PC-9 (cell line): ENCODE measurements at regions of chr10 and their contacts with region 1.

Region 1: DNA sequence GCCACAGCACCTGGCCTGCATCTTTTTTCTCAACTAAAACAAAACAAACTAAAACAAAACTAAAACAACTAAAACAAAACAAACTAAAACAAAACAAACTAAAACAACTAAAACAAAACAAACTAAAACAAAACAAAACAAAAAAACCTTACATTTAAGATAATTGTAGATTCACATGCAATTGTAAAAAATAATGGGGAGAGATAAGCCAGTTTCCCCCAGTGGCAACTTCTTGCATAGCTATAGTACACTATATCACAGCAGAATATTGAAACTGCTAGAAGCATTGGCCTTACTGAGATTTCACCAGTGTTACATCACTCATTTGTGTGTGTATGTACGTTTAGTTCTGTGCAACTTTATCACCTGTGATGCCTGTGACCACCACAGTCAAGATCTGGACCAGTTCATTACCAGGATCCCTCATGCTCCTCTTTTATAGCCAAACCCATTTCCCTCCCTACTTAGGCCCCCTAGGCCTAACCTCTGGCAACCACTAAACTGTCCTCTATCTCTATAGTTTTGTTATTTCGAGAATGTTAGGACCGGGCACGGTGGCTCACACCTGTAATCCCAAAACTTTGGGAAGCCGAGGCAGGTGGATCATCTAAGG is 9.3 kb downstream of the FXYD4 start:
- DNase-seq: peak in 1 of 2 experiments; percentile 39
- H3K4me3 ChIP-seq: no peak overlapping the region
- H3K27ac ChIP-seq: peak overlapping the region; percentile 78
- H3K4me1 ChIP-seq: peaks cover 5% of the 10 kb centered on the region
- H3K27me3 ChIP-seq: no peaks in the 10 kb centered on the region
- CTCF ChIP-seq: peak; percentile 46; the same call in 1 of the 2 replicates

Region 2: GRCh38 chr10:42975558-42976340 is 405.0 kb before region 1 on chr10:
- CTCF ChIA-PET with region 1: no interaction called
- POLR2A ChIA-PET with region 1: no interaction called
- intact Hi-C with region 1: no loop called
- DNase-seq: peak; percentile 16 to 44
- H3K4me3 ChIP-seq: no peak overlapping the region
- H3K27ac ChIP-seq: no peak overlapping the region
- H3K4me1 ChIP-seq: no peaks in the 10 kb centered on the region
- H3K27me3 ChIP-seq: no peaks in the 10 kb centered on the region
- CTCF ChIP-seq: peak; percentile 27; the same call in 1 of the 2 replicates

Region 3: GRCh38 chr10:43292755-43293676 is 87.7 kb before region 1 on chr10:
- CTCF ChIA-PET with region 1: interaction called, 10 read pairs
- POLR2A ChIA-PET with region 1: no interaction called
- intact Hi-C with region 1: no loop called
- DNase-seq: peak in 1 of 2 experiments; percentile 56
- H3K4me3 ChIP-seq: no peak overlapping the region
- H3K27ac ChIP-seq: no peak overlapping the region
- H3K4me1 ChIP-seq: peaks cover 9% of the 10 kb centered on the region
- H3K27me3 ChIP-seq: no peaks in the 10 kb centered on the region
- CTCF ChIP-seq: peak; percentile 78

Region 4: GRCh38 chr10:43479275-43479674 is 98.6 kb after region 1 on chr10:
- CTCF ChIA-PET with region 1: no interaction called
- POLR2A ChIA-PET with region 1: no interaction called
- intact Hi-C with region 1: no loop called
- DNase-seq: no peak
- H3K4me3 ChIP-seq: no peak overlapping the region
- H3K27ac ChIP-seq: no peak overlapping the region
- H3K4me1 ChIP-seq: no peaks in the 10 kb centered on the region
- H3K27me3 ChIP-seq: no peaks in the 10 kb centered on the region
- CTCF ChIP-seq: no peak